ENCODE measurements at regions of chr17 and their contacts with region 1.

Region 1: DNA sequence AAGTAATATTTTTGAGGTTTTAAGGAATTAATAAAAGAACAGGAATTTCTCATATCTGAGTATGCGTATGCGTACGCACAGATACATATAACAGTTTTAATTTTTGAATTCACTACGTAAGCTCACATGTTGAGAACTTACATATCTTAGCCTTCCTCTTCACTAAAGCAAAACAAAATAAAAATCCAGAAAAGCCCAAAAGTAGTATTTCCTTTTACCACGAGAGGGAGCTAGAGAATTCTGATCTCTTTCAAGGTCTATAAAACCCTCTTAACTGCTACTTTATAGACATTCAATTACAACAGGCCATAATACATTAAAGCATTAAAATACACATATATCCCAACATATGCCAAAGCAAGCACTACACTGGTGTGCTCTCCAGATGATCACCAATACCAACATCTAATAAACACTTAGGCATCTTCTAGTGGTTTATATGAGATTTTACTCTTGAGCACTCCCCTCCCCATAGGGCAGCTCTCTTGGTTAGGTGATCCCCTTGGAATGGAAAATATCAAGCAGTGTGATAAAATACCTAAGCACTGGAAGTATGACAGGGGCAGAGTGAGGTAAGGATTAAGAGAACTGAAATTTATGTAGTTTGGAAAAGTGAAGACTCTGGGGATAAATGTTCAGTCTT is 94.0 kb downstream of the SKAP1 start:
- DNase-seq: peak; percentile 17

Region 2: GRCh38 chr17:48254896-48255295 is 81.1 kb before region 1 on chr17:
- CTCF ChIA-PET with region 1: no interaction called
- POLR2A ChIA-PET with region 1: no interaction called
- DNase-seq: no peak

Region 3: GRCh38 chr17:48351831-48352332 is 15.9 kb after region 1 on chr17:
- CTCF ChIA-PET with region 1: interaction called, 20 read pairs
- POLR2A ChIA-PET with region 1: interaction called, 3 read pairs
- DNase-seq: peak; percentile 38

Region 4: GRCh38 chr17:48363161-48363560 is 27.2 kb after region 1 on chr17:
- CTCF ChIA-PET with region 1: no interaction called
- POLR2A ChIA-PET with region 1: no interaction called
- DNase-seq: no peak

Region 5: GRCh38 chr17:48375356-48375755 is 39.4 kb after region 1 on chr17:
- CTCF ChIA-PET with region 1: no interaction called
- POLR2A ChIA-PET with region 1: no interaction called
- DNase-seq: no peak